Natural killer cell (primary cell): ENCODE measurements at regions of chr6 and their contacts with region 1.

Region 1: GRCh38 chr6:88982720-88983119 is 19.3 kb upstream of the RNGTT start:
- DNase-seq: peak in 1 of 2 donors; percentile 81
- ATAC-seq: peak; percentile 86 to 99 (median 94)
- H3K4me3 ChIP-seq: no peak overlapping the region
- H3K4me3 Mint-ChIP-seq: no peak overlapping the region
- H3K27ac ChIP-seq: no peak overlapping the region
- H3K27ac Mint-ChIP-seq: no peak overlapping the region
- H3K4me1 ChIP-seq: no peaks in the 10 kb centered on the region
- H3K4me1 Mint-ChIP-seq: peaks cover 0 to 5% of the 10 kb centered on the region in 2 donors
- H3K27me3 ChIP-seq: no peaks in the 10 kb centered on the region
- H3K27me3 Mint-ChIP-seq: peaks cover 0 to 3% of the 10 kb centered on the region in 2 donors
- CTCF ChIP-seq: peak; percentile 84

Region 2: GRCh38 chr6:88870717-88871330 is 111.9 kb before region 1 on chr6:
- intact Hi-C with region 1: no loop called
- DNase-seq: peak in 1 of 2 donors; percentile 80
- ATAC-seq: peak; percentile 34 to 55 (median 52)
- H3K4me3 ChIP-seq: no peak overlapping the region
- H3K4me3 Mint-ChIP-seq: no peak overlapping the region
- H3K27ac ChIP-seq: no peak overlapping the region
- H3K27ac Mint-ChIP-seq: no peak overlapping the region
- H3K4me1 ChIP-seq: no peaks in the 10 kb centered on the region
- H3K4me1 Mint-ChIP-seq: peaks cover 0 to 11% of the 10 kb centered on the region in 2 donors
- H3K27me3 ChIP-seq: no peaks in the 10 kb centered on the region
- H3K27me3 Mint-ChIP-seq: no peaks in the 10 kb centered on the region
- CTCF ChIP-seq: peak; percentile 90

Region 3: DNA sequence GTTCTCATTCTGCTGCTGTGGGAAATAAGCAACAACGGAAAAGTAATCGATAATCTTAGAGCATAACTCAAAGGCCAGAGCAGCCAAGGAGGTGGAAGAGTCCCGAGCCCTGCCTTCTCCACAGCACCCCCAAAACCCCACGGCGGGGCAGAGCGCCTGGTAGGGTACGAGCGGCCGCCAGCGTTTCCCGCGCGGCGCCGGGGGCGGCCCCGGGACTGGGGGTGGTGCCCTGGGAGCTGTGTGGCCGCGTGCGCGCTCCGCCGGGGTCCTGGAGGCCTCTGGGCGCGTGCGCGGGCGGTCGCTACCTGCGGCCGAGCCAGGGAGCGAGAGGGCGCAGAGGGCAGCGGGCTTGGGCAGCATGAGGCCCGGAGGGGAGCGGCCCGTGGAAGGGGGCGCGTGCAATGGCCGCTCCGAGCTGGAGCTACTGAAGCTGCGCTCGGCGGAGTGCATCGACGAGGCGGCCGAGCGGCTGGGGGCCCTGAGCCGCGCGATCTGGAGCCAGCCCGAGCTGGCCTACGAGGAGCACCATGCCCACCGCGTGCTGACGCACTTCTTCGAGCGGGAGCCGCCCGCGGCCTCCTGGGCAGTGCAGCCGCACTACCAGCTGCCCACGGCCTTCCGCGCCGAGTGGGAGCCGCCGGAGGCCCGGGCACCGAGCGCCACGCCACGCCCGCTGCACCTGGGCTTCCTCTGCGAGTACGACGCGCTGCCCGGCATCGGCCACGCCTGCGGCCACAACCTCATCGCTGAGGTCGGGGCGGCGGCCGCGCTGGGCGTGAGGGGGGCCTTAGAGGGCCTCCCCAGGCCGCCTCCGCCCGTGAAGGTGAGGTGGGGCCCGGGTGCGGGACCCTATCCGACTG is 163.3 kb after region 1 on chr6 and contains the start of gene PM20D2:
- intact Hi-C with region 1: loop called (anchors 2 kb)
- DNase-seq: peak; percentile 49 to 76
- ATAC-seq: peak; percentile 79 to 83 (median 80)
- H3K4me3 ChIP-seq: peak within 1 kb of the TSS; percentile 51
- H3K4me3 Mint-ChIP-seq: peak within 1 kb of the TSS; percentile 99
- H3K27ac ChIP-seq: peak within 1 kb of the TSS; percentile 70
- H3K27ac Mint-ChIP-seq: peak within 1 kb of the TSS; percentile 79 to 93
- H3K4me1 ChIP-seq: peaks cover 5% of the 10 kb centered on the region
- H3K4me1 Mint-ChIP-seq: peaks cover 14 to 15% of the 10 kb centered on the region in 2 donors
- H3K27me3 ChIP-seq: no peaks in the 10 kb centered on the region
- H3K27me3 Mint-ChIP-seq: no peaks in the 10 kb centered on the region
- CTCF ChIP-seq: no peak
- total RNA-seq, gene PM20D2: 4.0 to 6.1 (median 4.9) TPM

Region 4: GRCh38 chr6:89242574-89243330 is 260.0 kb after region 1 on chr6:
- intact Hi-C with region 1: loop called (anchors 1 kb)
- DNase-seq: peak in 1 of 2 donors; percentile 55
- ATAC-seq: peak in 1 of 3 donors; percentile 44
- H3K4me3 ChIP-seq: no peak overlapping the region
- H3K4me3 Mint-ChIP-seq: no peak overlapping the region
- H3K27ac ChIP-seq: no peak overlapping the region
- H3K27ac Mint-ChIP-seq: peak overlapping the region in 1 of 2 donors; percentile 30
- H3K4me1 ChIP-seq: peaks cover 9% of the 10 kb centered on the region
- H3K4me1 Mint-ChIP-seq: peaks cover 13 to 19% of the 10 kb centered on the region in 2 donors
- H3K27me3 ChIP-seq: no peaks in the 10 kb centered on the region
- H3K27me3 Mint-ChIP-seq: peaks cover 2 to 19% of the 10 kb centered on the region in 2 donors
- CTCF ChIP-seq: no peak

Region 5: DNA sequence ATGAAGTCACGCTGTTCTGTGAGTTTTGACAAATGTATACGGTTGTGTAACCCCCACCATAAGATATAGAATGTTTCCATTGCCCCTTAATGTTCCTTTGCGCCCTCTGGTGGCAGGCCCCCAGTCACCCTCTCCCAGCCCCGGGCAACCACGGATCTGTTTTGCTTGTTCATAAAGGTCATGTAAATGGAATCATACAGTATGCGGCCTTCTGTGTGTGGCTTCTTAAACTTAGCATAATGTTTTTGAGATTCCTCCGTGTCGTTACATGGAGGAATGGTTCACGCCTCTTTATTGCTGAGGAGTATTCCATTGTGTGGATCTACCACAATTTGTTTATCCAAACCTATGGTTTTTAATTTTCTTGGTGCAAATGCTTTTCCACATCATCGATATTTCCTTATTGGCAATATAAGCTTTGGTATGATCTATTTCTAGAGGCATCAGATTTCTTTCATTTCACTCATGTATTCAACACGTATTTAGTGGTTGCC is 627.5 kb after region 1 on chr6:
- intact Hi-C with region 1: loop called (anchors 2 kb)
- DNase-seq: peak; percentile 73 to 83
- ATAC-seq: peak; percentile 82 to 91 (median 88)
- H3K4me3 ChIP-seq: no peak overlapping the region
- H3K4me3 Mint-ChIP-seq: no peak overlapping the region
- H3K27ac ChIP-seq: no peak overlapping the region
- H3K27ac Mint-ChIP-seq: no peak overlapping the region
- H3K4me1 ChIP-seq: no peaks in the 10 kb centered on the region
- H3K4me1 Mint-ChIP-seq: no peaks in the 10 kb centered on the region
- H3K27me3 ChIP-seq: no peaks in the 10 kb centered on the region
- H3K27me3 Mint-ChIP-seq: no peaks in the 10 kb centered on the region
- CTCF ChIP-seq: peak; percentile 93